ENCODE measurements at regions of chr10 and their contacts with region 1.

Region 1: DNA sequence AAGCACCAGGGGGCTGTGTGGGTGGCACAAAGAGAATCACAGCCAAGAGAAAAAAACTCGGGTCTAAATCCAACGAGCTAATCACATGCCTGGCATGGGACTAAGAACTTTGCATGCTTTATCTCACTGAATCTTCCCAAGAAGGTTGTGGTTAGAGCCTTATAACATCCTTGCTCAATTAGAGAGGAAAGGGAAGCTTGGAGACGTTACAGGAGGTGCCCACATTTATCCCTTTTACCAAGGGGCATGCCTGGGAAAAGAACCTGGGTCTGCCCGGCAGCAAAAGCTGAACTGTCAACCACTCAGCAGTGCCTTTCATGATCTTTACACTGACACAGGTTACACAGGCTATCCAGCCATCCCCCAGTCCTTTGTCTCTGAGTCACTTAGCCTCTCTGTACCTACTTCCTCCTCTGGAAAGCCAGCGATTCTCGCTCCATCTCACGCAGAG is 190.1 kb downstream of the PRPF18 start:
- DNase-seq: no peak
- H3K4me3 ChIP-seq: no peak overlapping the region
- CTCF ChIP-seq: no peak

Region 2: DNA sequence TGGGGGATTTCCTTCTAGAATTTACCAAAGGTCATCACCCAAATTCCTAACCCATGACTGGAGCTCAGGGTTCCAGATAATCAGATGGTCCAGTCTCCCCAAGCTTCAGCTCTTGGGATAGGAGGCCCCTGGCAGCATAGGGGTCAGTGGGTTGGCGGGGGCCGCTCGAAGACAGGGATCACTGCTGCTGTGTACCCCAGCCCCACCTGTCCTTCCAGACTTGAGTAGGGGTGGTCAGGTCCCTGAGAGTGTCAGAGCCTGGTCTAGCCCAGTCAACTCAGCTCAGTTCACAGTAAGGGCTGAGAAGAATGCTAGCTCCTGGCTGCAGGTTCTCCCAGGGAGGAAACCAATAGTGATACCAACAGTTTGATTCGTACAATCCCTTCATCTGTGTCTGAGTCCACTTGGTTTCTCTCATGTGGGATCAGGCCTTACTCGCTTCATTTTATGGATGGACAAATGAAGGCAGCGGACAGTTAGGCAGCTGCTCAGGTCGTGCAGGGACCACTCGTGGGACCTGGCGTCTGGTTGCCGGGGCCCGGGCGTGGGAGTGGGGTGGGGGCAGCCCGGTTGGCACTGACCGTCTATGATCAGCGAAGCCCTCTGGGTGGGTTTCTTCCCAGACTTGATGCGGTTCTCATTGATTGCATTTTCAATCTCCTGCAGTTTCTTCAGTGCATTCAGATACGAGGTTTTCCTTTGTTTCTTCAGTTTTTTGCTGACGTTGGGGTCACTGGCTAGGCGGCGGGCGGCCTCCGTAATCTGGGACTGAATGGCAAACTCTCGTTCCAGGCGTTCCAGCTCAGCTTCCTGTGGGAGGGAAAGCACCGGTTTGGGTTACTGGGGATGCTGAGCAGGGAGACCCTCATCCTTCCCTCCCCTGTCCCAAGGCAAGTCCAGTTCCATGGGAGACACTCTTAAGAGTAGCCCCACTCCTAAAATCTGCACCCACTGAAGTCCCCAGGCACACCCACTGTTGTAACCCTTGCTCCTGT is 111.1 kb before region 1 on chr10:
- CTCF ChIA-PET with region 1: interaction called, 79 read pairs
- POLR2A ChIA-PET with region 1: no interaction called
- DNase-seq: no peak
- H3K4me3 ChIP-seq: no peak overlapping the region
- CTCF ChIP-seq: no peak

Region 3: GRCh38 chr10:13847201-13847631 is 70.3 kb after region 1 on chr10:
- CTCF ChIA-PET with region 1: no interaction called
- POLR2A ChIA-PET with region 1: no interaction called
- DNase-seq: no peak
- H3K4me3 ChIP-seq: no peak overlapping the region
- CTCF ChIP-seq: no peak

Measured in AG04449 (cell line).